Calu3 (cell line): ENCODE measurements at regions of chr3 and their contacts with region 1.

Region 1: DNA sequence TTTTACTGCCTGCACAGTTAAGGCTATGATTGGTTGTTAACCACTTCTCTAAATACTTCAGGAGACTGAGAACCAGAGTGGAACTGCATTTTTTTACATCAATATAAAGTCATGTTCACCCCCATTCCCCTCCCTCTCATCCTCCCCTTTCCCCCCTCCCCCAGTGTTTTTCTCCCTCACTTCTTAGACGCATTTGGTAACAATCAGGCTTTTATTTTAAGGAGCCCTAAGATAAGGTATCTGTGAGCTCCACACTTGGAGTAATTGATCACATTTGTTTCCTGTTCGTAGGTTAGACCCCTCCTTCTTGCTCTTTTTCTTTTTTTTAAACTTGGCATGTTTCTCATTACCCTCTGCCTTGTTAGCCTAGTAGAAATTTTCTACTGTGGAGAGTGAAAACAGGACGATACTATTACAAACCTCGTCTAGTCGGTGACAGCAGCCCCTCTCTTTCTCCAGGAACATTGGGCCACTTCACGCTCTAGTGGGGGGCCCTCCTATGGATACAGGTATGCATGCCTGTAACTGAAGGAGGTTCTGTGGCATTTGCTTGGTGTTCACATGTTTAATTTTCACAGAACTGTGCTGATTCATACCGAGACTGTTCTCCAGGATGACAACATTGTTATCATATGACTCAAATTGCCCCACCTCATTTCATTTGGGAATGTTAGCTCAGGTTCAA is 314.4 kb downstream of the MECOM start:
- DNase-seq: peak; percentile 60
- H3K4me3 Mint-ChIP-seq: peak overlapping the region; percentile 65
- H3K27ac Mint-ChIP-seq: peak overlapping the region; percentile 96
- H3K4me1 Mint-ChIP-seq: peaks cover 74% of the 10 kb centered on the region
- H3K27me3 Mint-ChIP-seq: no peaks in the 10 kb centered on the region
- CTCF ChIP-seq: no peak

Region 2: GRCh38 chr3:169218314-169218983 is 130.6 kb before region 1 on chr3:
- CTCF ChIA-PET with region 1: no interaction called
- intact Hi-C with region 1: loop called (anchors 1 kb)
- DNase-seq: peak; percentile 80
- H3K4me3 Mint-ChIP-seq: no peak overlapping the region
- H3K27ac Mint-ChIP-seq: no peak overlapping the region
- H3K4me1 Mint-ChIP-seq: peaks cover 13% of the 10 kb centered on the region
- H3K27me3 Mint-ChIP-seq: no peaks in the 10 kb centered on the region
- CTCF ChIP-seq: peak; percentile 88